ENCODE measurements at regions of chr5 and their contacts with region 1.

Region 1: GRCh38 chr5:139422307-139422893 is 16.9 kb downstream of the DNAJC18 start:
- DNase-seq: peak; percentile 77
- H3K4me3 Mint-ChIP-seq: no peak overlapping the region
- H3K27ac Mint-ChIP-seq: no peak overlapping the region
- H3K4me1 Mint-ChIP-seq: peaks cover 5% of the 10 kb centered on the region
- H3K27me3 Mint-ChIP-seq: no peaks in the 10 kb centered on the region

Region 2: DNA sequence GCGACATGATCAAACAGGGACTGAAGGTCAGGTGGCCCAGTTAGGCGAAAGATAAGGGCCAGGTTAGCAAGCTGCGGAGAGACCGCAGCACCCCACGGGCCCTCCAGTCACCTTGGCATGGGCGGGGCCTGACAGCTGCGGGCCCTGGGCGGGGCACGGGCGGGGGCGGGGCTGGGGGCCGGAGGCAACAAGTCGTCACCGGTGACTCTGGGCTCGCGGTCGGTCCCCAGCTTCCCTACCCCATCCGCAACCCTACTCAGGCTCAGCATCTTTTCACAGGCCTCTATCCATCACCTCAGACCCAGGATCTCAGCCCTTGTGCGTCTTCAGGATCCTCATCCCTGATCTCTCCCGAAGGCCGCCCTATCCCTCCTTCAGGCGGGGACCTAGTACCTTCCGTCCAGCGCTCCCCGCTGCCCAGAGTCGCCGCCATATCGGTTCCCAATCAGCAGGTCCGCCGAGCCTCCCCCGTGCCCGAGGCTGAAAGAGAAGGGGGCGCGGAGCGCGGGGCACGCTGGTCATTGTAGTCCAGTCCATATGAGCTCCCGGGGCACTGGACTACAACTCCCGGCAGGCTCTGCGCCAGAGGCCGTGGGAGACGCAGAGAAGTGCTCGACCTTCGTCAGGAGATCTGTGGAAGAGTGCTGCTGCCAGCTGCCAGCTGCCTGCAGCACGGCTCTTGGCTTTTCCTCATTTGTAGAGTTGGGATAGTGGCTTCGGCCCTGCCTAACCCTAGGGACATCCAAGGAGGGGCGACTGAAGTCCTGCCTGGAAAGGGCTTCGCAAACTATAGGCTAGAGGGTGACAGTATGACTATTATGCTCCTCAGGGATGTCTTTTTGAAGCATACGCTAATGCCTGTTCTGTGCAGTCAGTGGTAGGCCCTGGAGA is 16.9 kb after region 1 on chr5 and contains the start of gene DNAJC18:
- CTCF ChIA-PET with region 1: interaction called, 11 read pairs
- intact Hi-C with region 1: no loop called
- DNase-seq: peak; percentile 94
- H3K4me3 Mint-ChIP-seq: peak within 1 kb of the TSS; percentile 95
- H3K27ac Mint-ChIP-seq: peak within 1 kb of the TSS; percentile 98
- H3K4me1 Mint-ChIP-seq: peaks cover 42% of the 10 kb centered on the region
- H3K27me3 Mint-ChIP-seq: no peaks in the 10 kb centered on the region
- total RNA-seq, gene DNAJC18: 18.1 to 18.8 TPM

Region 3: DNA sequence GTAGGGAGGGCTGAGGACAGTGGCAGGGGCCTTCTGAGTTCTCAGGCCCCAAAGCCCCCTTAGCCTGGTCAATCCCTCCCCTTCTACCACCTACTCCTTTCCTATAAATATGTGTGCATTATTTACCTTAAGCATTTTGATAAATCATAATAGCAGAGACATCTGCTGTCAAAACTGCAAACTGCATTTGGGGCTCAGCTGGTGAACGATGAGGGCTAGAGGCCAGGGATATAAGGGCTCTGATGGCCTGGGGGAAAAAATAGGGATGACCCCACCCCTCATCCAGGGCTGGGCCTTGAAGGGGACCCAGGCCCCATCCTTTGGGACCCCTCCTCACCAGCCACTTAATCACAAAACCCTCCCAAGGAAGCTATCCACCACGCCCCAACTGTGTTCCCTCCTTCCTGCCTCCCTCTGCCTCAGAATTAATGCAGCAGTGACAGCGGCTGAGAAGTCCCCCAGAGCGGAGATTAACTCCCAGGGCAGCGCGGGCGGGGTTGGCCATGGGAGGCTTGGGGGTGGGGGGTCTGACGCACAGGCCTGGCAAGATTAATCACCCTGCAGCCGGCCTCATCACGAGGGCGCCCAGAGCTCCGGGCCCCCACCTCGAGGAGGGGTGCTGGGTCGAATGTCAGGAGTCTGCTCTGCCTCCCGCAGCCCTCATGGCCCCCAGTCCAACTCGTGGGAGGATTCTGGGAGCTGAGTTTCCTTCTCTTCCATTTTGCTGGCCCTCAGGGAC is 267.8 kb after region 1 on chr5:
- CTCF ChIA-PET with region 1: interaction called, 4 read pairs
- intact Hi-C with region 1: loop called (anchors 1 kb)
- DNase-seq: peak; percentile 41
- H3K4me3 Mint-ChIP-seq: no peak overlapping the region
- H3K27ac Mint-ChIP-seq: no peak overlapping the region
- H3K4me1 Mint-ChIP-seq: peaks cover 2% of the 10 kb centered on the region
- H3K27me3 Mint-ChIP-seq: no peaks in the 10 kb centered on the region

Measured in activated naive CD4-positive, alpha-beta T cell treated with anti-CD3 and anti-CD28 coated beads for 36 hours (primary cell).